ENCODE measurements at regions of chr22 and their contacts with region 1.

Region 1: GRCh38 chr22:26364066-26365015 is 64.7 kb upstream of the ASPHD2 start:
- DNase-seq: peak; percentile 79
- ATAC-seq: peak; percentile 96
- H3K4me3 Mint-ChIP-seq: no peak overlapping the region
- H3K27ac Mint-ChIP-seq: no peak overlapping the region
- H3K4me1 Mint-ChIP-seq: peaks cover 3% of the 10 kb centered on the region; the same call in 1 of the 2 replicates
- H3K27me3 Mint-ChIP-seq: peaks cover 5% of the 10 kb centered on the region
- CTCF ChIP-seq: 0 out of 2 replicates have a peak, but pooled peaks have one; percentile 47

Region 2: DNA sequence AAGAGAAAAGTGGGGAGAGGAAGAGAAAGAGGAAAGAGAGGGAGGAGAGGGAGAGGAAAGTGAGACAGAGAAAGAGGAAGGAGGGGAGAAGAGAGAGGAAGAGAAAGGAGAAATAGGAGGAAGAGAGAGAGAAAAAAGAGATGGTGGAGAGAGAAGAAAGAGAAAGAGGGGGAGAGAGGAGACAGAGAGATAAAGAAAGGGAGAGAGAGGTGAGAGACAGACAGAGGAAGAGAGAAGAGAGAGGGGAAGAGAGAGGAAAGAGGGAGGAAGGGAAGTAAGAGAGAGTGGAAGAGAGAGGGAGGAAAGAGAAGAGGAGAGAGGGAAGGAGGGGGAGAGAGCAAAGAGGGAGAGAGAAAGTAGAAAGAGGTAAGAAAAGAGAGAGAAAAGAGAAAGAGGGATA is 204.5 kb before region 1 on chr22:
- CTCF ChIA-PET with region 1: no interaction called
- POLR2A ChIA-PET with region 1: no interaction called
- DNase-seq: no peak
- ATAC-seq: no peak
- H3K4me3 Mint-ChIP-seq: no peak overlapping the region
- H3K27ac Mint-ChIP-seq: no peak overlapping the region
- H3K4me1 Mint-ChIP-seq: peaks cover 8% of the 10 kb centered on the region
- H3K27me3 Mint-ChIP-seq: peaks cover 12% of the 10 kb centered on the region
- CTCF ChIP-seq: no peak

Region 3: GRCh38 chr22:26377170-26377830 is 13.0 kb after region 1 on chr22:
- CTCF ChIA-PET with region 1: interaction called, 51 read pairs
- POLR2A ChIA-PET with region 1: no interaction called
- DNase-seq: no peak
- ATAC-seq: peak; percentile 89
- H3K4me3 Mint-ChIP-seq: peak overlapping the region; percentile 57
- H3K27ac Mint-ChIP-seq: no peak overlapping the region; the same call in 1 of the 2 replicates
- H3K4me1 Mint-ChIP-seq: peaks cover 21% of the 10 kb centered on the region
- H3K27me3 Mint-ChIP-seq: peaks cover 36% of the 10 kb centered on the region
- CTCF ChIP-seq: no peak

Region 4: DNA sequence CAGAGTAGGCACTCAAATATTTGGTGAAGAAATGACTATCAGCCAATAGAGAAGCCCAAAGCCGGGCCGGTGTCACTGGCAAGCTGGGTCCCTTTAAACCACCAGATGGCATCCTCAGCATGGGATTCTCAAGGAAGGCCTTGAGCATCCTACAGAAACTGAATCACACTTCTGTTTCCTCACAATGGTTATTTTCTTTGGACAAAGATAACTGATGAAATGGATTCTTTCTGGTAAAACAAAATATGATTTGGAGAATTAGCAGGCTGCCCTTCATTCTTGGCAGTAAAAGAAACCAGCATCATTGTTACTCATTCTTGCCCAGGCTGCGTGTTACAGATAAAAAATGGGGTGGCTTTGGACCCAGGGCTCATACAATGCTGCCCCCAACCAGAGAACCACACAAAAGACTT is 34.4 kb after region 1 on chr22:
- CTCF ChIA-PET with region 1: interaction called, 12 read pairs
- POLR2A ChIA-PET with region 1: no interaction called
- DNase-seq: peak; percentile 55
- ATAC-seq: peak; percentile 77
- H3K4me3 Mint-ChIP-seq: no peak overlapping the region
- H3K27ac Mint-ChIP-seq: no peak overlapping the region
- H3K4me1 Mint-ChIP-seq: peaks cover 6% of the 10 kb centered on the region; the same call in 1 of the 2 replicates
- H3K27me3 Mint-ChIP-seq: peaks cover 3% of the 10 kb centered on the region; the same call in 1 of the 2 replicates
- CTCF ChIP-seq: no peak

Region 5: GRCh38 chr22:26428515-26429457 is 64.4 kb after region 1 on chr22 and contains the start of gene ASPHD2:
- CTCF ChIA-PET with region 1: interaction called, 21 read pairs
- POLR2A ChIA-PET with region 1: no interaction called
- DNase-seq: peak; percentile 74
- ATAC-seq: peak; percentile 86
- H3K4me3 Mint-ChIP-seq: peak within 1 kb of the TSS; percentile 90
- H3K27ac Mint-ChIP-seq: peak within 1 kb of the TSS; percentile 25; the same call in 1 of the 2 replicates
- H3K4me1 Mint-ChIP-seq: peaks cover 15% of the 10 kb centered on the region
- H3K27me3 Mint-ChIP-seq: peaks cover 48% of the 10 kb centered on the region
- CTCF ChIP-seq: no peak
- total RNA-seq, gene ASPHD2: 7.1 to 8.1 TPM (median 8.0 TPM) in 3 replicates

Region 6: GRCh38 chr22:26452236-26453016 is 88.1 kb after region 1 on chr22:
- CTCF ChIA-PET with region 1: interaction called, 17 read pairs
- POLR2A ChIA-PET with region 1: no interaction called
- DNase-seq: no peak
- ATAC-seq: no peak
- H3K4me3 Mint-ChIP-seq: no peak overlapping the region
- H3K27ac Mint-ChIP-seq: no peak overlapping the region
- H3K4me1 Mint-ChIP-seq: no peaks in the 10 kb centered on the region
- H3K27me3 Mint-ChIP-seq: no peaks in the 10 kb centered on the region
- CTCF ChIP-seq: no peak

Region 7: DNA sequence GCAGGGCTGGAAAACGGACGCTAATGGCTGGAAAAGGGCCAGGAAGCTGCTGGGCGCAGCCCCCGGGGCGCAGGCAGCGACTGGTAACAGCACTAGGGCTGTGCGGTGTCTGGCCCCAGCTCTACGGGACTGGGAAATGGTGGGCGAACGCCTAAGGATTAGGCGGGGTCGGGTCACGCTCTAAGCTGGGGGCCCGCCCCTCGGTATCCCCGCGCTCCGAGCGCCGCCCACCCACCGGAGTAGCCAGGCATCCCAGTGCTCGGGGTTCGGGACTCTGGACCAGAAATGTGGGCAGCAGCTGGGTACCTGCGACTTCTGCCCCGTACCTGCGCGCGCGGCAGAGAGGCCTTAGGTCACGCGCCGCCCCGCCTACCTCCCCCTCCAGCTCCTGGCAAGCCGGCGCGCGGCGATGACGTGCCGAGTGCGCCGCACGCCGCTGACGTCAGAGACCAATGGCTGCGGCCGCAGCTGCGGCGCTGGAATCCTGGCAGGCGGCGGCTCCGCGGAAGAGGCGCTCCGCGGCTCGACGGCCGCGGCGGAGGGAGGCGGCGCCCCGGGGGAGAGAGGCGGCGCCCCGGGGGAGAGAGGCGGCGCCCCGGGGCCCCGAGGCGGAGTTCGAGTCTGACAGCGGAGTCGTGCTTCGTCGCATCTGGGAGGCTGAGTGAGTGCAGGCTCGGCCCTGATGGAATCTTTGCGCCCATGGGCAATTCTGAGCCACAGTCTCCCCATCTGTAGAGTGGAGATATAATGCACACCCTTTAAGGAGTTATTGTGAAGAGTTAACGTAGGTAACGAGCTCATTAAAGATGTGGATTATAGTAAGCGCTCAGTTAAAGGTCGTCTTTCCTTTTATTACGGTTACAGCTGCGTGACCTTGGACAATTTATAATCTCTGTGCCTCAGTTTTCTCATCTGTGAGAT is 119.4 kb after region 1 on chr22 and contains the starts of genes HPS4 and SRRD:
- CTCF ChIA-PET with region 1: interaction called, 17 read pairs
- POLR2A ChIA-PET with region 1: interaction called, 3 read pairs
- DNase-seq: peak; percentile 93
- ATAC-seq: peak; percentile 92
- H3K4me3 Mint-ChIP-seq: peak within 1 kb of the TSS; percentile 89
- H3K27ac Mint-ChIP-seq: peak within 1 kb of the TSS; percentile 94
- H3K4me1 Mint-ChIP-seq: peaks cover 45% of the 10 kb centered on the region
- H3K27me3 Mint-ChIP-seq: no peaks in the 10 kb centered on the region
- CTCF ChIP-seq: no peak
- total RNA-seq, gene HPS4: 41.1 to 48.1 TPM (median 42.7 TPM) in 3 replicates
- total RNA-seq, gene SRRD: 20.0 to 25.1 TPM (median 22.9 TPM) in 3 replicates

Measured in WTC11 (cell line).